Activated B cell treated with CpG ODN at 0.5 μM for 24 hours (primary cell): ENCODE measurements at regions of chr14 and their contacts with region 1.

Region 1: GRCh38 chr14:103391048-103391447 is 5.8 kb downstream of the MARK3 start:
- DNase-seq: no peak
- ATAC-seq: peak; percentile 82
- H3K4me3 Mint-ChIP-seq: no peak overlapping the region
- H3K27ac Mint-ChIP-seq: peak overlapping the region; percentile 43
- H3K4me1 Mint-ChIP-seq: peaks cover 72% of the 10 kb centered on the region
- H3K27me3 Mint-ChIP-seq: no peaks in the 10 kb centered on the region
- CTCF ChIP-seq: no peak

Region 2: DNA sequence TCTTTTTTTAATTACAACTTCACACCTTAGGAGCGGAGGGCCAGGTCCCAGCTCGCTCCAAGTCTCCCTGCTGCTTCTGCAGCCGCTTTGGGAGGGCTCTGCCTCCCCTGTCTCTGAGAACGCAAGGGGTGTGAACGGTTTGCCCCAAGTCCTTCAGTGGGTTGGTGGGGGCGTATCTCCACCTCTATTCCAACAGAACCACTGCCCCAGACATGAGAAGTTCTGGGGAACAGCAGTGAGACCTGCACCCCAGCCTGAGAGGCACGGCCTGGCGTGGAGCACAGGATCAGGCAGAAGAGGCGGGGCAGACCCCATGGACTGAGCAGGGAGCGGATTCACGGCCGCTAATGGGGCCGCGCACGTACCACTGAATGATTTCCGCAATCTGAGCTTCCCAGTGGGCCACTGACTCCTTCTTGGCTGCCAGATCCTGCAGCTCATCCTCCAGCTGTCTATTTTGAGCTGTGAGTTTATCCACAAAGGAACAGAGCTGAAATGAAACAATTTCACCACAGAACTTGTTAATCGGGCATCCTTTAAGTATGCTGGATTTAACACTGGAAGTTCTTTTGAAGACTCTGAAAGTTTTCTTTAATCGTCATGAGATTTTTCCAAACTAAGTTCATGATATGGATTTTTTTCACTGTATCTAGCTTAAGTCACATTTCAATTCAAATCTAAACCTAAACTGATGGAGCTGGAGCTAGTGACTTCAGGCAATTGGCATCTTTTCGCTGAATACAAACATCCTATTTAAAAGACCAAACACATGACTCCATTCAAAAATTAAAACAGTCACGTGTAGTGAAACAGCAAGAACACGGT is 424.2 kb before region 1 on chr14:
- CTCF ChIA-PET with region 1: no interaction called
- POLR2A ChIA-PET with region 1: no interaction called
- intact Hi-C with region 1: no loop called
- DNase-seq: no peak
- ATAC-seq: no peak
- H3K4me3 Mint-ChIP-seq: no peak overlapping the region
- H3K27ac Mint-ChIP-seq: no peak overlapping the region
- H3K4me1 Mint-ChIP-seq: no peaks in the 10 kb centered on the region
- H3K27me3 Mint-ChIP-seq: no peaks in the 10 kb centered on the region
- CTCF ChIP-seq: no peak

Region 3: DNA sequence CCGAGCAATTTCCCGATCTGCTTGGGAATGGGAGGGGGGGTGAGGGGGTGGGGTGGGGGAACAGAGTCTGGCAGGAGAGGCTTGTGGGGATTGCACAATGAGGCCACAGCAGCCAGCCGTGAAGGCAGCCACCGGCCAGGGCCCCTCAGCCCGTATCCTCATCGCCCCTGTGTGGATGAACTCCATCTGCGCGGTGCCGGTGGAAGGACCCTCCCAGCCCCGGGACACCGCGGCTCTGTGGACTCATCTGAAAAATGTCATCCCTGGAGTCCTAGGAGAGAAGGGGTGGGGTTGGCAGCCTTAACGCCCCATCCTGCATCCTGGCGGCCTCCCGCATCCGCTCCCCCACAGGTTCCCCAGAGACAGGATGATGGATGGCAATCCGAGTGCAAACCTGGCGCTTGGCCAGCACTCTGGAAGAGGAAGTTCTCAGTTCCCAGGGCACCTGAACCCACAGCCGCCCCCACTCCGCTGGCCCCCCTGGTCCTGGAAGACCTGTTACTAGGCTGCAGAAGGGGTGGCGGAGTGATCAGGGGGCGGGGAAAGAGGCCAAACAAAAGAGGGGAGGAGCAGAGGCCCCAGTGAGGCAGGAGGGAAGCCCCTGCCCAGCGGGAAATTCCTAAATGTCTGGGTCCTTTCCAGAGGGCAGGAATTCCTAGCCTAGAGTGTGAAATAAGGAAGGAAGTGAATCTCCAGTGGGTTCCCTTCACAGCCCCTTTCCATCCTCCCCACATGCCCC is 269.0 kb before region 1 on chr14:
- CTCF ChIA-PET with region 1: no interaction called
- POLR2A ChIA-PET with region 1: no interaction called
- intact Hi-C with region 1: no loop called
- DNase-seq: no peak
- ATAC-seq: peak; percentile 32
- H3K4me3 Mint-ChIP-seq: peak overlapping the region; percentile 2
- H3K27ac Mint-ChIP-seq: no peak overlapping the region
- H3K4me1 Mint-ChIP-seq: peaks cover 14% of the 10 kb centered on the region
- H3K27me3 Mint-ChIP-seq: peaks cover 24% of the 10 kb centered on the region
- CTCF ChIP-seq: no peak

Region 4: GRCh38 chr14:103401223-103402214 is 10.5 kb after region 1 on chr14:
- CTCF ChIA-PET with region 1: interaction called, 12 read pairs
- POLR2A ChIA-PET with region 1: no interaction called
- intact Hi-C with region 1: no loop called
- DNase-seq: no peak
- ATAC-seq: peak; percentile 37
- H3K4me3 Mint-ChIP-seq: peak overlapping the region; percentile 3
- H3K27ac Mint-ChIP-seq: peak overlapping the region; percentile 9
- H3K4me1 Mint-ChIP-seq: peaks cover 57% of the 10 kb centered on the region
- H3K27me3 Mint-ChIP-seq: no peaks in the 10 kb centered on the region
- CTCF ChIP-seq: no peak

Region 5: DNA sequence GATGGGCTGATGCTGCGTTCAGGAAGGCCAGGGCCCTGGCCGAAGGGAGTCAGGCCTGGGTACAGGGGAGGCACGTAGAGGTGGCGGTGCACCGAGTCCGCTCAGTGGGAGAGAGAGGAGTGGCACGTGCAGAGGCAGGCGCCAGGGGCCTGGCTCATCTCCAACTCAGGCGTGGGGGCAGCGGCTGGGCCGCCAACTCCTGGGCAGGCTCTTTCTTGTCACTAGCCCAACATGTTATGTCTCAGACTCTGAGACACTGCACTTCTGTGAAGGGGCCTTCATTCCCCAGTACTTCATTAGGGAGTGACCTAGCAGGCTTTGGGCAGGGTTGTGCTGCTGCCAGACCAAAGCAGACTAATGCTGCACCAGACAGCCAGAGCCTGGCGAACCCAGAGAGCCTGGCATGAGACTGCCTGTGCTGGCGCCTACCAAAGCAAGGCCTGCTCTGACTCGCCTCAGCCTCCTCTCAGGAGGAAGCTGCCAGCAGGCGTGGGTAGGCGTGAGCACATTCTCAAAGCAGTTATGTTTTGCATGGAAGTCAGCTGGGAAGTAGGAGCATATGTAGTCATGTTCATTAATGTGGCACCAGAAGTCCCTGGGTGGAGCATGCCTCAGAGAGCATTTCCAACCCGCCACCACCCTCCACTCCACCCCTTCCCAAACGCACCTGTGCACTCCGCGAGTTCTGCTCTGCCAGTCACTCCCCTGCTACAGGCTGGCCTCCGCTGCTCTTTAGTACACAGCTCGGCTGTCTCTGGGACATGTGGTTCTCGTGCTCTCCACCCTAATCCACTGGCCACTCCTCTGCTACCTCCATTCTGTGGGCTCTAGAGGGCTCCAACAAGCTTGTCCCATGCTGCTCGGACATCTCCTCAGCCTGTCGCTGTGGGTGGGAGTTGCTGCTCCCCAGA is 121.9 kb after region 1 on chr14:
- CTCF ChIA-PET with region 1: no interaction called
- POLR2A ChIA-PET with region 1: no interaction called
- intact Hi-C with region 1: no loop called
- DNase-seq: no peak
- ATAC-seq: no peak
- H3K4me3 Mint-ChIP-seq: no peak overlapping the region
- H3K27ac Mint-ChIP-seq: no peak overlapping the region
- H3K4me1 Mint-ChIP-seq: no peaks in the 10 kb centered on the region
- H3K27me3 Mint-ChIP-seq: no peaks in the 10 kb centered on the region
- CTCF ChIP-seq: no peak